Posterior vena cava (tissue), 2 donors: ENCODE measurements at regions of chrX and their contacts with region 1.

Region 1: GRCh38 chrX:8971116-8971515 is 62.8 kb downstream of the FAM9B start:
- DNase-seq: no peak

Region 2: DNA sequence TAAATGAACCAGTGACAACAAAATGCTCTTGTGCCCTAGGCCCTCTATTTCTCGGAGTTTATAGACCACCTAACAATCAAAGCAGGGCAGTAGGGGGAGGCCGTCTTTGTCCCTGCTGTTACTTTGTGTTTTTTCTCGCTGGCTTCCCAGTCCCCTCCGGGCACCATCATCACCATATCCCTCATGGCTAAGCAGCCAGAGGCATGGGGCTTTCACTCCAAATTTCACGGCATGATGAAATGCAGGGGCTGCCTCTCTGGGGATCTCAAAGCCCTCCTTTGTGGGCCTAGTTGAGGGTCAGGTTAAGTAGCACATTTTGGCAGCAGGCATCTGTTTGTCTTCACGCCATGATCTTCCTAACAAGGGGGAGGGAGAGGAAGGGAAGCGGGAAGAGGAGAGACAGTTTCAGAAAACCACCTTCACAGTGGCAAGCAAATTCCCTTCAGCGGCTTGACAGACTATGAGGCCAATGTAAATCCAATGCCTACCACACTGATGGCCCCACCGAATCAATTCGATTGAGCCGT is 331.1 kb before region 1 on chrX:
- intact Hi-C with region 1: no loop called
- DNase-seq: no peak

Region 3: DNA sequence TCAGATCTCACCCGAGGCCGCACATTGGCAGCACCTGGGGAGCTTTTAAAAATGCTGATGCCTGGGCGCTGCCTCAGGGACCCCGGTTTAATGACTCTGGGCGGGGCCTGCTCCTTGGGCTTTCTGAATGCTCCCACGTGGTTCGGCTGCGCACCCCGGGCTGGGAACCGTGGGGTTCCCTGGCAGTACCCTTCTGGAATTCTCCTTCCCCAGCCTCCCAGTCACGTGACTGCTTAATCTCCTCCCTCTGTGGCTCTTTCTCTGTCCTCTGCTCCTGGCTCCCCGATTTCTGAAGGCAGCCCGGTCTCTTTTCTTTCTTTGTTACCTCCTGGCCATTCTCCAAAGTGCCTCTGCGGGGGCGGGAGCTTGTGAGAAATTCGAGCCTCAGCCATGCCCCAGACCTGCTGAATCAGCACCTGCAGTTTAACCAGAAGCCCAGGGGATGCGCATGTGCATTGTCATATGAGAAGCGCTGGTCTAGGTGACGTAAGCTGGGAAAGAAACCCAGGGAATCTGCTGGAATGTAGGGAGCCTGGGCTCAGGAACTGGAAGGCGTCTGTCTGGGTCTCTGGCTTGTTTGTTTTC is 1202.3 kb after region 1 on chrX:
- intact Hi-C with region 1: loop called in 1 of 2 experiments (anchors 5 kb)
- DNase-seq: peak; percentile 81